ENCODE measurements at regions of chr14 and their contacts with region 1.

Region 1: DNA sequence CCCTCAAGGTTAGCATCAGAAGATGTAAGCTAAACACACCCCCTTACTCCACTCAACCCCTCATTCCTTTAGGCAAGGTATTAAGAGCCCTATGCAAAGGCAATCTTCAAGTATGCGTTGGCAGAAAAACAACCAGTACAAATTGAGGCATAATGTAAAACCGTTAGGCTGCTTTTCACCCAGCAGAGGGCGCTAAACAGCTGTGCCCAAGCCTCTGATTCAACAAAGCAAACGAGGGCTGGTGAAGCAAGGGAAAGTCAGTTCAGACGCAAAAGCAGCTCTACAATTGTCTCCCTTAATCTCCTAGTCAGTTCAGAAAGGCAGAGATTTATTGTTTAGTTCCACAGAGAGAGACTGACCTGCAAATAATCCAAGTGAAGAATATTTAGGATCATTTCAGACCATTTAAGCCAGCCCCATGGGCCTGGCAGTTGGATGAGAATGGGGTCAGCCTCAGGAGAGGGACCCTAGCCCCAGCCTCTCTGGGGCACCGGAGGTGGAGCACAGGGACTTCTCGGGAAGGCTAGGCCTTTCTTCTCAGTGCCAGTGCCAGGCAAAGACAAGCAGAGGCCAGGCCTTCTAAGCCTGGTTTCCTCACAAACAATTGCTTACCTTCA is 23.5 kb downstream of the DCAF5 start:
- DNase-seq: peak; percentile 83

Region 2: GRCh38 chr14:67387195-67387594 is 1742.2 kb before region 1 on chr14:
- intact Hi-C with region 1: no loop called
- DNase-seq: no peak

Region 3: DNA sequence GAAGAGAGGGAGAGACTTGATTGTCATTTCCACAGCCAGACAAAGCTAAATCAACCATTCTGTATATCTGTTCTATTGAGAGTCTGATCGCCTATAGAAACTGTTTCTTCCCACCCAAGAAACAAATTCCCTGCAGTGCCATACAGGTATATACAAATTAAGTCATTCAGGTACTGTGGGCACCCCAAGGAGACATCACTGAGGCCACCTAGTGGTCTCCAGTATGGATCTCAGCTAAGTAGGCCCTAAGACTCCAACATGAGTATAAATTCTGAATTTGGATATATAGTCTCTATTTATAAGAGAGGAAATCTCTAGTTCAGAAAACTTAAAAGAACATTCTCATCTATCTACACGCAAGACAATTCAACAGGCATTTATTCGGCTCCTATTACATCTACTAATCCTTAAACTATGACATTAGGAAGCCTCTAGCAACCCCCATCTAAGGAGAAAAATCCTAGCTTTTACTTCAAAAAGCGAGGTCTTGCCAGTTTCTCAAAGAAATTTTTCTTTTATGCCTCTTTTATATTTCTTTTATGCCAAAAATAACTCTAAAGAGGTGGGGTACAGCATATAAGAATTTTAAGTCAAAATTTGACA is 39.1 kb before region 1 on chr14:
- intact Hi-C with region 1: no loop called
- DNase-seq: no peak

Region 4: GRCh38 chr14:69226178-69226577 is 96.8 kb after region 1 on chr14:
- intact Hi-C with region 1: loop called (anchors 5 kb)
- DNase-seq: no peak

Region 5: DNA sequence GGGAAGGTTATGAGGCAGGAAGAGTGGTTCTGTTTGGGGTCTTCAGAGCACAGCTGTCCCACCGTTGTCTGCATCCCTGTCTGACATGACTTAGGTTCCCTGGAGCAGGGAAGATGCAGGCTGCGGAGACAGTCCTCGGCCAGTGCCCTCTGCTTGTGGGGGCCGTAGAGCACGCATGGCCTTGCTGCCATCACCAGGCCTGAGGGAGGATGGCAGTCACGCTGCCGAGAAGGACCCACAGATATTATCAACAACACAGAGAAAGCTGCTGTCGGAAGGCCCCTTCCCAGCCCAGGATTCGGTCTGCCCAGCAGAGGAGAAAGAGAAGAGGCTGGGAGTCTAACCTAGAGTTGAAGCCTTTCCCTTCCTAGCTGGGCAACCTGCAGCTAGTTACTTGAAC is 233.7 kb after region 1 on chr14:
- intact Hi-C with region 1: no loop called
- DNase-seq: no peak

Region 6: GRCh38 chr14:69460093-69460701 is 330.8 kb after region 1 on chr14:
- intact Hi-C with region 1: loop called (anchors 10 kb)
- DNase-seq: no peak